Right cardiac atrium (tissue), 5 donors: ENCODE measurements at regions of chr20 and their contacts with region 1.

Region 1: GRCh38 chr20:58870239-58871014 is 17.9 kb downstream of the GNAS start:
- DNase-seq: peak; percentile 57 to 78 (median 78)
- ATAC-seq: peak; percentile 82 to 87
- H3K4me3 ChIP-seq: no peak overlapping the region
- H3K27ac ChIP-seq: no peak overlapping the region
- H3K4me1 ChIP-seq: no peaks in the 10 kb centered on the region
- H3K27me3 ChIP-seq: no peaks in the 10 kb centered on the region

Region 2: GRCh38 chr20:59087829-59088433 is 217.5 kb after region 1 on chr20:
- intact Hi-C with region 1: loop called in 1 of 4 experiments (anchors 10 kb)
- DNase-seq: peak; percentile 82 to 94 (median 87)
- ATAC-seq: peak; percentile 63 to 75
- H3K4me3 ChIP-seq: no peak overlapping the region
- H3K27ac ChIP-seq: no peak overlapping the region
- H3K4me1 ChIP-seq: no peaks in the 10 kb centered on the region
- H3K27me3 ChIP-seq: no peaks in the 10 kb centered on the region

Region 3: GRCh38 chr20:59177261-59178250 is 307.1 kb after region 1 on chr20:
- intact Hi-C with region 1: no loop called
- DNase-seq: no peak
- ATAC-seq: no peak
- H3K4me3 ChIP-seq: no peak overlapping the region
- H3K27ac ChIP-seq: no peak overlapping the region
- H3K4me1 ChIP-seq: no peaks in the 10 kb centered on the region
- H3K27me3 ChIP-seq: no peaks in the 10 kb centered on the region

Region 4: GRCh38 chr20:59403261-59403961 is 533.0 kb after region 1 on chr20:
- intact Hi-C with region 1: loop called in 1 of 4 experiments (anchors 5 kb)
- DNase-seq: peak; percentile 38 to 74 (median 73)
- ATAC-seq: peak; percentile 65 to 83
- H3K4me3 ChIP-seq: no peak overlapping the region
- H3K27ac ChIP-seq: no peak overlapping the region
- H3K4me1 ChIP-seq: no peaks in the 10 kb centered on the region
- H3K27me3 ChIP-seq: no peaks in the 10 kb centered on the region

Region 5: DNA sequence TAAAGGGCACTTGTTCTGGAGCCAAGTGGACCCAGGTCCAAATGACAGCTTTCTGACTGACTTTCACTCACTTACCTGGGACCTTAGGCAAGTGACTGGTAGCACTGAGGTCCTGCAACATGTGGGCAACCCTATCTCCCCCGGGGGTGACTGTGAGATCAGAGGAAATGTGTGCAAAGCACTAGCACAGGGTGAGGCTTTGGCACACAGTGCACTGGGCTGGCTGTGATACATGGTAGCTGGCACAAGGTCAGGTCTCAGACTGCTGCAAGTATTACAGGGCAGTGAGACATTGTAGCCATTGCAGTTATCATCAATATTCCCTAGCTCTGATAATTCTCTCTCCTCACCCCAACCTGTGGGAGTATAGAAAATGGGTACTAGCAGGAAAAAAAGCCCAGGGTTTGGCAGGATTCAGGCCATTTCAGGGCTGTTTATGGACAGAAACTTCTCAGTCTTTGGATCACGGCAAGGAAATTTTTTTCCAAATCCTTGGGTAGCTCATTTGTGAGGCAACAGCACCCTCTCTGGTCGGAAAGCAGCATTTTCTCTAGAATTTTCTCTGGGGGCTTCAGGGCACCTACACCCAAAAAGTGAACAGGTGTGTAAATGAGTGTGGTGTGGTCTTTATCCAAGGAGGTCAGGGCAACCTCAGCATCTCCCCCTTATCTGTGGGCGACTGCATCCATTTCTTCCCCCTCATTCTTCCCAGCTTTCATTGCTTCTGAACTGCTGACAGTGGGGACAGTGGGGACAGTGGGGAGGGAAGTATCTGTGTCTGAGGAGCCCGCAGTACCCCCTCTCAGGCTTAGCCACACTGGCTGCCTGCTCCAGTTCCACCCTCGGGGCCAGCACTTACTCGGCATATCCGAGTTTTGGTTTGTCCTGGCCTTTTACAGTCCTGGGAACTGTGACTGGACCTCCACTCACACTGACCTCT is 585.2 kb after region 1 on chr20:
- intact Hi-C with region 1: loop called in 1 of 4 experiments (anchors 10 kb)
- DNase-seq: peak in 2 of 3 donors; percentile 54 to 82
- ATAC-seq: peak; percentile 75 to 77
- H3K4me3 ChIP-seq: no peak overlapping the region
- H3K27ac ChIP-seq: no peak overlapping the region
- H3K4me1 ChIP-seq: no peaks in the 10 kb centered on the region
- H3K27me3 ChIP-seq: no peaks in the 10 kb centered on the region